ENCODE measurements at regions of chr14 and their contacts with region 1.

Region 1: DNA sequence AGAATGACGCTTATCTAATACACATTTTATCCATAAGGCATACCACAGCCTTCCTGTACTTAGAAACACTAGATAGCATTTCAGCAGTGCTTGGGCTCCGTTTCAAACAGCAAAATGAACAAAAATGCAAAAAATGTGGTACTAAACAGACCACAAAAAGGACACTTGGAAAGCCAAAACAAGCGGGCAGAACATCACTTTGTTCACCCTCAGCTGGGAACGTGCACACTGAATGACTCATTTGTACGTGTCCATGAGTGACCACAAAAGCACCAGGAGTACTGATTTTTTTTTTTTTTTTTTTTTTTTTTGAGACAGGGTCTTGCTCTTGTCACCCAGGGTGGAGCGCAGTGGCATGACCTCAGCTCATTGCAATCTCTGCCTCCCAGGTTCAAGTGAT is 8.9 kb upstream of the FOXN3 start:
- DNase-seq: no peak
- H3K4me3 ChIP-seq: no peak overlapping the region
- H3K27ac ChIP-seq: no peak overlapping the region
- H3K4me1 ChIP-seq: peaks cover 14 to 26% of the 10 kb centered on the region in 2 donors
- H3K27me3 ChIP-seq: no peaks in the 10 kb centered on the region
- CTCF ChIP-seq: no peak
- POLR2A ChIP-seq: no peak

Region 2: GRCh38 chr14:89027097-89027740 is 398.7 kb before region 1 on chr14:
- intact Hi-C with region 1: loop called in 1 of 2 experiments (anchors 5 kb)
- DNase-seq: peak; percentile 26 to 67 (median 51)
- H3K4me3 ChIP-seq: peak overlapping the region in 2 of 4 donors; percentile 54 to 61
- H3K27ac ChIP-seq: no peak overlapping the region
- H3K4me1 ChIP-seq: peaks cover 6 to 11% of the 10 kb centered on the region in 2 donors
- H3K27me3 ChIP-seq: no peaks in the 10 kb centered on the region
- CTCF ChIP-seq: peak; percentile 26 to 94 (median 78)
- POLR2A ChIP-seq: peak in 1 of 2 donors; percentile 16

Region 3: DNA sequence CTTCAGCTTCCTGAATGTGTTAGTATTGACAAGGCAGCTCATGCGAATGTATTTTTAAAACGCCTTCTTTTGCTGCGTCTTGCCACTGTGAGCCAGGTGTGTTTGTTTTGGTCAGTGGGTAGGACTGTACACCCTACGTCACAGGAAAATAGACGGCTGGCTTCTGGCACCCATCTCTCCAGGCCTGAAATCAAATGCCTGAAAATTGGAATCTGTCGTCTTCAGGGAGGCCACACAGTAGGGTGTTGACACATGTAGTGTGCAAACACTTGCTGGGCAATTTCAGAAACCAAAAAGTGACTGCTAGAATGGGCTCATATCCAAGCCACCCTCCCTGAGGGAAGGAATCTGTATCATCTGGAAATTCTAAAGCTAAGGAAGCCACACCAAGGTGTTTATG is 392.2 kb before region 1 on chr14:
- intact Hi-C with region 1: loop called (anchors 5 kb)
- DNase-seq: no peak
- H3K4me3 ChIP-seq: no peak overlapping the region
- H3K27ac ChIP-seq: no peak overlapping the region
- H3K4me1 ChIP-seq: no peaks in the 10 kb centered on the region
- H3K27me3 ChIP-seq: no peaks in the 10 kb centered on the region
- CTCF ChIP-seq: no peak
- POLR2A ChIP-seq: no peak

Region 4: GRCh38 chr14:89618811-89619551 is 193.1 kb after region 1 on chr14:
- intact Hi-C with region 1: loop called in 1 of 2 experiments (anchors 10 kb)
- DNase-seq: peak; percentile 52 to 74 (median 67)
- H3K4me3 ChIP-seq: peak overlapping the region in 3 of 4 donors; percentile 49 to 93 (median 69)
- H3K27ac ChIP-seq: peak overlapping the region in 4 of 5 donors; percentile 8 to 95 (median 70)
- H3K4me1 ChIP-seq: peaks cover 5 to 42% of the 10 kb centered on the region in 2 donors
- H3K27me3 ChIP-seq: no peaks in the 10 kb centered on the region
- CTCF ChIP-seq: no peak
- POLR2A ChIP-seq: peak; percentile 49 to 58

Region 5: GRCh38 chr14:89767861-89768268 is 341.9 kb after region 1 on chr14:
- intact Hi-C with region 1: loop called in 1 of 2 experiments (anchors 10 kb)
- DNase-seq: peak; percentile 35 to 63 (median 47)
- H3K4me3 ChIP-seq: no peak overlapping the region
- H3K27ac ChIP-seq: no peak overlapping the region
- H3K4me1 ChIP-seq: no peaks in the 10 kb centered on the region
- H3K27me3 ChIP-seq: no peaks in the 10 kb centered on the region
- CTCF ChIP-seq: peak; percentile 38 to 73 (median 66)
- POLR2A ChIP-seq: no peak

Region 6: GRCh38 chr14:89915114-89915878 is 489.4 kb after region 1 on chr14:
- intact Hi-C with region 1: loop called in 1 of 2 experiments (anchors 10 kb)
- DNase-seq: peak; percentile 34 to 91 (median 61)
- H3K4me3 ChIP-seq: no peak overlapping the region
- H3K27ac ChIP-seq: no peak overlapping the region
- H3K4me1 ChIP-seq: peaks cover 0 to 13% of the 10 kb centered on the region in 2 donors
- H3K27me3 ChIP-seq: no peaks in the 10 kb centered on the region
- CTCF ChIP-seq: peak; percentile 83 to 96 (median 89)
- POLR2A ChIP-seq: no peak

Measured in adrenal gland (tissue), 19 donors.